ENCODE measurements at regions of chr3 and their contacts with region 1.

Region 1: DNA sequence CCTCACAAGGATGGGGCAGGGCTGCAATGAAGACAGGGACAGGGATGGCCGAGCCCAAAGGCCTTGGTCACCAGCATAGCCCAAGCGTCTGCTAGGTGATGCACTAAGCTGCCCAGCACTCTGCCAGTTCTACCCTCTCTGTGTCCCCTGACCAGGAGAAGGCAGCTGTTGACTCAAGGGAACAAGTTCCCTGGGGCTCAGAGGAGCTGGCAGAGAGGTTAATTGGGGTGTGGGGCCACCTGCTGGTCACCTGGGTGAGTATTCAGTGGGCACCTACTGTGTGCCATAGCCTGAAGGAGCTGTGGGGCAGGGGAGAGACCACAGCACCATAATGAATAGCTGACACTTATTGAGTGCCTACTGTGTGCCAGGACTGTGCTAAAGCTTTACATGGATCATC is 22.0 kb upstream of the DOCK3 start:
- DNase-seq: peak; percentile 68
- H3K4me3 Mint-ChIP-seq: no peak overlapping the region
- H3K27ac Mint-ChIP-seq: peak overlapping the region; percentile 16
- H3K4me1 Mint-ChIP-seq: peaks cover 23% of the 10 kb centered on the region
- H3K27me3 Mint-ChIP-seq: no peaks in the 10 kb centered on the region

Region 2: GRCh38 chr3:50620420-50620819 is 32.3 kb before region 1 on chr3:
- CTCF ChIA-PET with region 1: interaction called, 57 read pairs
- POLR2A ChIA-PET with region 1: interaction called, 24 read pairs
- DNase-seq: peak; percentile 33
- H3K4me3 Mint-ChIP-seq: peak overlapping the region; percentile 77
- H3K27ac Mint-ChIP-seq: peak overlapping the region; percentile 90
- H3K4me1 Mint-ChIP-seq: peaks cover 79% of the 10 kb centered on the region
- H3K27me3 Mint-ChIP-seq: no peaks in the 10 kb centered on the region

Region 3: DNA sequence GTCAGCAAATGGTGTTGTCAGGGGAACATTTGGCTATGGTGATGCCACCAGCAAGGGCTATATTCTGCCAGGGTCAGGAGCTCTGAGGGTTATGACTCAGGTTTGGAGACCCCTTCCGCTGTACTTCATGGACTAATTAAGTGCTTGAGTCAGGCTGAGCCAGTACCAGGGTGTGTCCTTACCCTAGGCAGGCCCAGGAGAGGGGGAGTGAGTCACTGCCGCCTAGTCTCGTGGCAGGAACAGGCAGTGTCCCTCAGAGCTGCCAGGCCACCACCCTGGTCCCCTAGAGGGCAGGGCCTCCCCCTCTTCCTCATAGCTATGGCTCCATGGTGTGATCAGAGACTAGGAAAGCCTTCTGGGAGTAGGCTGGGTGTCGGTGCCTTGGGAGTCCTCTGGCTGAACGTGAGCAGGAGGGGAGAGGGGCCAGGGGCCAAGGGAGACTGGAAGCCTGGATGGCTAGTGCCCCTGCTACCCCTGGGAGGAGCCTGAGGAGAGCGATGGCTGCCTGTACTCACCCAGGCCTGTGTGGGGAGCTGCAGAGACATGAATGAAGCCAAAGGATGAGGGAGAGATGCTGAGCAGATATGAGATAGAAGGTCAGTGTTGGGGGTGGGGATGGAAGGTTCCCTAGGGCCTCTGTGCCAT is 25.2 kb before region 1 on chr3:
- CTCF ChIA-PET with region 1: interaction called, 17 read pairs
- POLR2A ChIA-PET with region 1: interaction called, 14 read pairs
- DNase-seq: no peak
- H3K4me3 Mint-ChIP-seq: no peak overlapping the region
- H3K27ac Mint-ChIP-seq: peak overlapping the region; percentile 40
- H3K4me1 Mint-ChIP-seq: peaks cover 97% of the 10 kb centered on the region
- H3K27me3 Mint-ChIP-seq: no peaks in the 10 kb centered on the region

Measured in activated CD4-positive, alpha-beta memory T cell treated with anti-CD3 and anti-CD28 coated beads, Interleukin-2, amount 10 ng/mL, durations not matched to agents 7 days and 5 days (primary cell).